ENCODE measurements at regions of chr2 and their contacts with region 1.

Region 1: GRCh38 chr2:181632733-181633401 is 24.0 kb downstream of the CERKL start:
- DNase-seq: no peak
- ATAC-seq: no peak
- H3K4me3 ChIP-seq: no peak overlapping the region
- H3K4me3 Mint-ChIP-seq: no peak overlapping the region
- H3K27ac ChIP-seq: no peak overlapping the region
- H3K27ac Mint-ChIP-seq: no peak overlapping the region
- H3K4me1 ChIP-seq: no peaks in the 10 kb centered on the region
- H3K4me1 Mint-ChIP-seq: no peaks in the 10 kb centered on the region
- H3K27me3 ChIP-seq: no peaks in the 10 kb centered on the region
- H3K27me3 Mint-ChIP-seq: peaks cover 3% of the 10 kb centered on the region
- CTCF ChIP-seq: no peak

Region 2: DNA sequence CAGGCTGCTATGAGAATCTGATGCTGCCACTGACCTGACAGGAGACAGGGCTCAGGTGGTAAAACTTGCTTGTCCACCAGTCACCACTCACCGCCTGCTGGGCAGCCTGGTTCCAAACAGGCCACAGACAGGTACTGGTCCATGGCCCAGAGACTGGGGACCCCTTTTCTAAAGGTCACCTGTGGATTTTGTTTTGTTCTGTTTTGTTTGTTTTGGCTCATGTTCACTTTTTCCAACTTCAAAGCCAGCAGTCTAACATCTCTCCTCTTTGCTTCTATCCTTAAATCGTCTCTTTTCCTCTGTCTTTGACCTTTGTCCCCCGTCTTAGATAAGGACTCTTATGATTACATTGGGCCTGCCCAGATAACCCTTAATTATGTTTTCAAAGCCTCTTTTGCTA is 27.3 kb after region 1 on chr2:
- CTCF ChIA-PET with region 1: no interaction called
- POLR2A ChIA-PET with region 1: no interaction called
- intact Hi-C with region 1: loop called in 1 of 2 experiments (anchors 1 kb)
- DNase-seq: no peak
- ATAC-seq: no peak
- H3K4me3 ChIP-seq: no peak overlapping the region
- H3K4me3 Mint-ChIP-seq: no peak overlapping the region
- H3K27ac ChIP-seq: no peak overlapping the region
- H3K27ac Mint-ChIP-seq: no peak overlapping the region
- H3K4me1 ChIP-seq: peaks cover 14% of the 10 kb centered on the region
- H3K4me1 Mint-ChIP-seq: peaks cover 8% of the 10 kb centered on the region
- H3K27me3 ChIP-seq: peaks cover 0 to 8% of the 10 kb centered on the region in 2 experiments
- H3K27me3 Mint-ChIP-seq: peaks cover 20% of the 10 kb centered on the region
- CTCF ChIP-seq: no peak